ENCODE measurements at regions of chr20 and their contacts with region 1.

Region 1: DNA sequence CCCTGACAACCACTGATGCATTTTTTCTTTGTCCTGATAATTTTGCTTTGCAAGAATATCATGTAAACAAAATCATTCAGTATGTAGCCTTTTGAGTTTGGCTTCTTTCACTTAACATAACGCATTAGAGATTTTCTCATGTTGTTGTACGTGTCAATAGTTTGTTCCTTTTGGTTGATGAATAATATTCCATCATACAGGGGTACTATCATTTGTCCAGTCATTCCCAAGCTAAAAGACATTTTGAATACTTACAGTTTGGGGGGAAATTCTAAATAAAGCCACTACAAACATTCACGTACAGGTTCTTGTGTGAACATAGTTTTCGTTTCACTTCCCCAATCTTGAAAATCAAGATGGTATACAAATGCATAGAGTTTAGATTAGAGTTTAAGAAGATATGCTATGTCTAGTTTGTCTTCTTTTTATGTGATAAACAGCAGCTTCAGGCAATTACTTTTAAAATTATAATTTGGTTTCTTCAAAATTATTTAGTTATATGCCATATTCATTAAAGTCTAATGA is 5.2 kb downstream of the HAO1 start:
- DNase-seq: no peak
- H3K4me3 ChIP-seq: no peak overlapping the region
- H3K27ac ChIP-seq: no peak overlapping the region
- H3K4me1 ChIP-seq: no peaks in the 10 kb centered on the region
- H3K27me3 ChIP-seq: no peaks in the 10 kb centered on the region
- CTCF ChIP-seq: no peak
- EP300 ChIP-seq: no peak
- POLR2A ChIP-seq: no peak
- RAD21 ChIP-seq: no peak

Region 2: DNA sequence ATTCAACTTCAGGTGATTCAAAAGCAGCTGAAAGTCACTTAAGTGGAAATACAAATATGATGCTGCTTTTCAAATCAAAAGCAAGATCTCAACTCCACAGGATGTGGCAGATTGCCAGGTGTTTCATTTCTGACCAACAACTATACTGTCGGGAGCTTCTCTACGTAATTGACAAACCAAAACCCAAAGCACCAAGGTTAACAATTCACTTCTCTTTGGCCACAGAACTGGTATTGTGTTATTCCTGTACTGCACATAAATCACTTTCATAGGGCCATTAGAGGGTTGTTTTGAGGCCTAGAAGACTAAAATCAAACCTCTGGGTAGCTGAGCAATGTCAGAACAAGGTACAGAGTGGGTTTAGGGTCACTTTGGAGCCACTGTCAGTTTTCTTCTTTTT is 164.5 kb before region 1 on chr20:
- CTCF ChIA-PET with region 1: no interaction called
- POLR2A ChIA-PET with region 1: no interaction called
- DNase-seq: no peak
- H3K4me3 ChIP-seq: no peak overlapping the region
- H3K27ac ChIP-seq: no peak overlapping the region
- H3K4me1 ChIP-seq: no peaks in the 10 kb centered on the region; a peak in 1 of 7 replicates
- H3K27me3 ChIP-seq: no peaks in the 10 kb centered on the region
- CTCF ChIP-seq: no peak
- EP300 ChIP-seq: no peak
- POLR2A ChIP-seq: no peak
- RAD21 ChIP-seq: no peak

Region 3: GRCh38 chr20:7950387-7950786 is 15.3 kb after region 1 on chr20:
- CTCF ChIA-PET with region 1: interaction called, 11 read pairs
- POLR2A ChIA-PET with region 1: no interaction called
- DNase-seq: no peak
- H3K4me3 ChIP-seq: no peak overlapping the region
- H3K27ac ChIP-seq: no peak overlapping the region
- H3K4me1 ChIP-seq: no peaks in the 10 kb centered on the region
- H3K27me3 ChIP-seq: no peaks in the 10 kb centered on the region
- CTCF ChIP-seq: no peak
- EP300 ChIP-seq: no peak
- POLR2A ChIP-seq: no peak
- RAD21 ChIP-seq: no peak

Region 4: GRCh38 chr20:7980332-7981046 is 45.4 kb after region 1 on chr20:
- CTCF ChIA-PET with region 1: interaction called, 53 read pairs
- POLR2A ChIA-PET with region 1: no interaction called
- DNase-seq: peak in 1 of 2 experiments; percentile 1
- H3K4me3 ChIP-seq: no peak overlapping the region
- H3K27ac ChIP-seq: no peak overlapping the region
- H3K4me1 ChIP-seq: peaks cover 0 to 11% (median 2%) of the 10 kb centered on the region in 4 experiments; a peak in 3 of 7 replicates
- H3K27me3 ChIP-seq: no peaks in the 10 kb centered on the region
- CTCF ChIP-seq: peak in 2 of 3 experiments; percentile 40 to 48; a peak in 3 of 4 replicates
- EP300 ChIP-seq: no peak
- POLR2A ChIP-seq: no peak
- RAD21 ChIP-seq: peak; percentile 36 to 52; a peak in 3 of 4 replicates

Region 5: GRCh38 chr20:7989379-7989778 is 54.3 kb after region 1 on chr20:
- CTCF ChIA-PET with region 1: interaction called, 53 read pairs
- POLR2A ChIA-PET with region 1: interaction called, 3 read pairs
- DNase-seq: no peak
- H3K4me3 ChIP-seq: no peak overlapping the region
- H3K27ac ChIP-seq: no peak overlapping the region
- H3K4me1 ChIP-seq: peaks cover 0 to 5% (median 0%) of the 10 kb centered on the region in 4 experiments; a peak in 2 of 7 replicates
- H3K27me3 ChIP-seq: no peaks in the 10 kb centered on the region
- CTCF ChIP-seq: no peak
- EP300 ChIP-seq: no peak
- POLR2A ChIP-seq: no peak
- RAD21 ChIP-seq: peak in 1 of 2 experiments; percentile 26; a peak in 2 of 4 replicates

Measured in H1 (cell line).